ENCODE measurements at regions of chr16 and their contacts with region 1.

Region 1: DNA sequence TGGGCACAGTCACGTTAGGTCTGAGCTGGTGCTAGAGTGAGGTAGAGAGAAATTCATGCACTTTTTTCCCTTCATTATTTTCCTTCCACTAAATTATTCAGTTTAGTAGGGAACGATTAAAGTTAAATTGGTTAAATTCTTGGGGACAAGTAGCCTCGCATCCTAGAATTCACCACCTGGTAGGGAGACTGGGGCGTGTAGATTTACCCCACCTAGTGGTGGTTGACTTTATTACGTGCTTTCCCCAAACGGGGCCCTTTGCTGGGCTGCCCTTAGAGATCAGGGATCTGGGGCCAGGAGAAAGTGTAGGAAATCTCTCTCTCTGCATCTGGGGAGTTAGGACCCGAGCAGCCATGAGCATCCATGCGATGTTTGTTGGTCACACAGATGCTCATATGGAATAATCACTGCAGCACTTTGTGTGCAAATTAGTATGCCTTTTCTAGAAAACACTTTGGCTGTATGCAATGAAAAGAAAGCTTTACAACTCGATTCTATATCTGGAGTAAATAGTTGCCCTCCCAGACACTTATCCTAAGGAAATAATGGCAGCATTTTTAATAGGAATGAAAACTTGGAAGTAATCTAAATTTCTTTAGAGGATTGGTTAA is 107.0 kb downstream of the PLCG2 start:
- DNase-seq: peak; percentile 34 to 58
- H3K4me3 ChIP-seq: no peak overlapping the region
- H3K4me1 ChIP-seq: no peaks in the 10 kb centered on the region
- H3K27me3 ChIP-seq: no peaks in the 10 kb centered on the region

Region 2: DNA sequence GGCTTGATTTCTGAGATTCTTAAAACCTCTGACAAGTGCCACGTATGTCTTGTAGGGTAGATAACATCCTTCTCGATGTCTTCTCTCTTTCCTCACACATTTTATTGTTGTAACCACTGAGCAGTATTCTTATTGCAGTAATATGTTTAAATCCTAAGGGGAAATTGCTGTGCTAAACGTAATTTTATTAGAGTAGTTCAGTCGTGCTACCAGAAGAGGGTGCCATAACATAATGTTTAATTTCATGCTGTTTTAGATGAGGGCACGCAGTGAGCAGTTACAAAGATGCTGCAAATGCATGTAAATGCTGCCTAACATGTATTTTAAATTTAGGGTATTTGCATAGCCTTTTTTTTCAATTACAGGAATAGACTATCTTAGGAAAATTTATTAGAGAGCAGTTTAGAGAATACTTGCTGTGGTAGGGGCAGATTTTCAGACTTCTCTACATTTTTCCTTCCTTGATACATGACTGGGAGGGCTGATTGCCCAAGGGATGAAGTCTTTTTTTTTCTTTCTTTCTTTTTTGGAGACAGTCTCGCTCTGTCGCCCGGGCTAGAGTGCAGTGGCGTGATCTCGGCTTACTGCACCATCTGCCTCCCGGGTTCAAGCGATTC is 519.7 kb before region 1 on chr16:
- in situ Hi-C with region 1: loop called (anchors 25 kb)
- DNase-seq: peak; percentile 24 to 54
- H3K4me3 ChIP-seq: no peak overlapping the region
- H3K4me1 ChIP-seq: no peaks in the 10 kb centered on the region
- H3K27me3 ChIP-seq: no peaks in the 10 kb centered on the region